ENCODE measurements at regions of chr15 and their contacts with region 1.

Region 1: GRCh38 chr15:32690941-32691688 is 26.7 kb upstream of the GREM1 start:
- DNase-seq: no peak
- ATAC-seq: no peak
- H3K4me3 ChIP-seq: no peak overlapping the region
- H3K27ac ChIP-seq: no peak overlapping the region
- H3K4me1 ChIP-seq: no peaks in the 10 kb centered on the region
- H3K27me3 ChIP-seq: no peaks in the 10 kb centered on the region
- CTCF ChIP-seq: no peak

Region 2: GRCh38 chr15:33194704-33195670 is 503.9 kb after region 1 on chr15 and contains the start of gene FMN1:
- CTCF ChIA-PET with region 1: no interaction called
- POLR2A ChIA-PET with region 1: interaction called, 12 read pairs
- in situ Hi-C with region 1: no loop called
- intact Hi-C with region 1: no loop called
- DNase-seq: peak; percentile 81
- ATAC-seq: peak; percentile 100
- H3K4me3 ChIP-seq: peak within 1 kb of the TSS; percentile 70 to 84
- H3K27ac ChIP-seq: peak within 1 kb of the TSS; percentile 92
- H3K4me1 ChIP-seq: peaks cover 4% of the 10 kb centered on the region; the same call in 1 of the 2 replicates
- H3K27me3 ChIP-seq: no peaks in the 10 kb centered on the region
- CTCF ChIP-seq: no peak
- total RNA-seq, gene FMN1: 3.9 TPM

Measured in Panc1 (cell line).